ENCODE measurements at regions of chr6 and their contacts with region 1.

Region 1: GRCh38 chr6:127690092-127690491 is 113.1 kb downstream of the C6orf58 start:
- DNase-seq: peak; percentile 32
- H3K4me3 Mint-ChIP-seq: no peak overlapping the region
- H3K27ac Mint-ChIP-seq: no peak overlapping the region
- H3K4me1 Mint-ChIP-seq: no peaks in the 10 kb centered on the region
- H3K27me3 Mint-ChIP-seq: peaks cover 59% of the 10 kb centered on the region
- CTCF ChIP-seq: peak; percentile 51

Region 2: DNA sequence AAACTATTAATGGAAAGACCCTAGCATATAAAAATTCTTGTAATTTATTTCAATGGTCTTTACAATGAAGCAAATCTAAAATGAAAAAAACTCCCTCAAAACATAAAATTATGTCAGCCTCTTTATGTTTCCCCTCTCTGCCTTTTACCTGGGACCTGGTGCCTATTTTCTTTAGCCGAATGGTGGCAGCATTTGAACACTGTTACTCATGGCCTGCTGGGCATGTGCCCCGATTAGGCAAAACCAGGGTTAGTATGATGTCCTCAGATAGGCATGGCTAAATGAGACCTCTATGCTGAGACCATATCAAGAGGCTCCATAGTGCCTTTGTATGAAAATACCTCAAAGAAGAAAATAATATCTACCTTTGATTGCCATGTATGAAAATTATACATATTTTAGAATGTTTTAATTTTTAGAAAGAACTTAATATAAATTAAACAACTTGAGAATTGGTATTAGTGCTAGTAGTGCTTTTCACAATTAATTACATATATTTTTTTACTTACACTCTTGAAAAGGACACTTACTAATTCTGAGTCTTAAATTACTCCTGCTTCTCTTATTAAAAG is 135.6 kb before region 1 on chr6:
- CTCF ChIA-PET with region 1: interaction called, 9 read pairs
- POLR2A ChIA-PET with region 1: no interaction called
- intact Hi-C with region 1: loop called (anchors 1 kb)
- DNase-seq: peak; percentile 69
- H3K4me3 Mint-ChIP-seq: no peak overlapping the region
- H3K27ac Mint-ChIP-seq: no peak overlapping the region
- H3K4me1 Mint-ChIP-seq: peaks cover 6% of the 10 kb centered on the region
- H3K27me3 Mint-ChIP-seq: peaks cover 10% of the 10 kb centered on the region
- CTCF ChIP-seq: peak; percentile 47

Region 3: DNA sequence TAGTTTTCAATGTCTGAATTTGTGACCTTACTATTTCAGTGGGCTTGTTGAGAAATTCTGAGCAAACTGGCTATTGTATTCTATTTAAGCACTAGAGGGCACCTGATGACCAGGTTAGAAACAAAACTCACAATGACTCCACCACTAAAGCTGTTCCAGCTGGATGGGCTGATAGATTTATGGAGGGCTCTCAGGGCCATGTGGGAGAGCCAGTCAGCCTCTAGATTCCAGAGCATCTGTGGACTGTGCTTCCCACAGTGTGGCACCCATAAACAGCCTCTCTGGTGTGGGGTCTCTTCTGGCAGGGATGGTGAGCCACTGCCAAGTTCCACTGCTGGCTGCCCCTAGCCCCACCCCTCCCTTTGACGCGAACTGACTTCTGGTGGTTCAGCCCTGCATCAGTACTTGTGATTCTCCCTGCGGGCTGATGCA is 83.9 kb before region 1 on chr6:
- CTCF ChIA-PET with region 1: interaction called, 8 read pairs
- POLR2A ChIA-PET with region 1: no interaction called
- intact Hi-C with region 1: loop called (anchors 1 kb)
- DNase-seq: peak; percentile 61
- H3K4me3 Mint-ChIP-seq: no peak overlapping the region
- H3K27ac Mint-ChIP-seq: no peak overlapping the region
- H3K4me1 Mint-ChIP-seq: no peaks in the 10 kb centered on the region
- H3K27me3 Mint-ChIP-seq: no peaks in the 10 kb centered on the region
- CTCF ChIP-seq: peak; percentile 47

Region 4: GRCh38 chr6:127918506-127919427 is 228.7 kb after region 1 on chr6:
- CTCF ChIA-PET with region 1: no interaction called
- POLR2A ChIA-PET with region 1: no interaction called
- intact Hi-C with region 1: no loop called
- DNase-seq: no peak
- H3K4me3 Mint-ChIP-seq: no peak overlapping the region
- H3K27ac Mint-ChIP-seq: no peak overlapping the region
- H3K4me1 Mint-ChIP-seq: no peaks in the 10 kb centered on the region
- H3K27me3 Mint-ChIP-seq: no peaks in the 10 kb centered on the region
- CTCF ChIP-seq: no peak